ENCODE measurements at regions of chr17 and their contacts with region 1.

Region 1: GRCh38 chr17:64020056-64020766 is at the start of gene ICAM2:
- DNase-seq: peak in 4 of 5 donors; percentile 73 to 83 (median 79)
- ATAC-seq: peak; percentile 86 to 95 (median 88)
- H3K4me3 ChIP-seq: peak within 1 kb of the TSS; percentile 25 to 71 (median 58)
- H3K27ac ChIP-seq: peak within 1 kb of the TSS; percentile 68 to 96 (median 86)
- H3K4me1 ChIP-seq: peaks cover 0 to 72% (median 10%) of the 10 kb centered on the region in 12 donors
- H3K27me3 ChIP-seq: no peaks in the 10 kb centered on the region
- CTCF ChIP-seq: peak in 1 of 12 donors; percentile 5
- POLR2A ChIP-seq: peak in 1 of 2 donors; percentile 56
- total RNA-seq, gene ICAM2: 24.4 to 262 (median 33.0) TPM

Region 2: GRCh38 chr17:64005734-64006167 is 14.5 kb before region 1 on chr17:
- intact Hi-C with region 1: loop called in 1 of 10 experiments (anchors 2 kb)
- DNase-seq: peak in 1 of 5 donors; percentile 31
- ATAC-seq: no peak
- H3K4me3 ChIP-seq: peak overlapping the region; percentile 16 to 62 (median 50)
- H3K27ac ChIP-seq: peak overlapping the region; percentile 60 to 93 (median 82)
- H3K4me1 ChIP-seq: peaks cover 8 to 77% (median 47%) of the 10 kb centered on the region in 12 donors
- H3K27me3 ChIP-seq: no peaks in the 10 kb centered on the region
- CTCF ChIP-seq: no peak
- POLR2A ChIP-seq: no peak

Measured in heart left ventricle (tissue), 16 donors.